ENCODE measurements at regions of chr10 and their contacts with region 1.

Region 1: DNA sequence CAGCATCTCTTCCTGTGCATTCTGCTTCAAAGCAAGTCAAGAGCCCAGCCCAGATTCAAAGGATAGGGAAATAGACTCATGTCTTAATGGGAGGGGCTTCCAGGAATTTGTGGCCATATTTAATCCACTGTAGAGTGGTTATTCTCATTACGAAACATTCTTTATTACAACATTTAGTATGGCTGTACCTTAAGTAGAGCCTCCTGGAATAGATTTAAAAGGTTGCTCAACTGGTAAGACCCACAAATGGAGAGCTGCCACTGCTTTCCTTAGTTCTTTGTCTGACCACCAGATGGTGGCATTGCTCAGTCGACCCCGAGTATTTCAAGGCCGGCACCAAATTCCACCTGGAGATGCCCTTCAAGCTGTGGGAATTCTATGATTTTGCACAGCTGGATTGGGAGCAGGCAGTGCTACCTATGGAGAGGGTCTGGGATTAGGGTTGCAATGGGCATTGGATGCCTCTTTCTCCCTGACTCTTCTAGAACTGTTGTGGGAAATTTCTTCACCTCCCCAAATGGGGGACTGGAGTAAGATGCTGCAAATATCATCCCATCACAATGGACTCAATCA is 102.2 kb downstream of the RBM20 start:
- DNase-seq: peak; percentile 84
- H3K4me3 Mint-ChIP-seq: no peak overlapping the region
- H3K27ac Mint-ChIP-seq: no peak overlapping the region
- H3K4me1 Mint-ChIP-seq: peaks cover 43% of the 10 kb centered on the region
- H3K27me3 Mint-ChIP-seq: no peaks in the 10 kb centered on the region

Region 2: DNA sequence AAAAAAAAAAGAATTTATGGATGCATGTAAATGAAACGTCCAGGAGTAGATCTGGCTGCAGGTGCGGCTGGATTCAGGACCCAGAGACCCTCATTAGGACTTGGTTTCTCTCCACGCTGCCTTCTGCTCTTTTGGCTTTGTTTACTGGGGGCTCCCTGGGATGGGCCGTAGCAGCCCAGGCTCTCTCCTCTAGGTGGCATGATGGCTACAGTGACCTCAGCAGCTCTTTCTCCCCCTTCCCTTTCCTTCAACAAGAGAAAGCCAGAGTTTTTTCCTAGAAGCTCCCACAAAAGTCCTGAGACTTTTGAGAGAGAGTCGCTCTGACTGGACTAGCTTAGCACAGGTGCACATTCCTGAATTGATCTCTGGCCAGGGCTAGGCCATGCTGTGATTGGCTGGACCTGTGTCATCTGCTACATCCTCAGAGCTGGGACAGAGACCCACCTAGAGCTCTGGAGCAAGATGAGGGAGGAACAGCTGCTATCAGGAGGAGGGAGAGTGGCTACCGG is 57.5 kb after region 1 on chr10:
- intact Hi-C with region 1: loop called (anchors 5 kb)
- DNase-seq: peak; percentile 72
- H3K4me3 Mint-ChIP-seq: peak overlapping the region; percentile 23
- H3K27ac Mint-ChIP-seq: peak overlapping the region; percentile 17
- H3K4me1 Mint-ChIP-seq: peaks cover 38% of the 10 kb centered on the region
- H3K27me3 Mint-ChIP-seq: no peaks in the 10 kb centered on the region

Region 3: DNA sequence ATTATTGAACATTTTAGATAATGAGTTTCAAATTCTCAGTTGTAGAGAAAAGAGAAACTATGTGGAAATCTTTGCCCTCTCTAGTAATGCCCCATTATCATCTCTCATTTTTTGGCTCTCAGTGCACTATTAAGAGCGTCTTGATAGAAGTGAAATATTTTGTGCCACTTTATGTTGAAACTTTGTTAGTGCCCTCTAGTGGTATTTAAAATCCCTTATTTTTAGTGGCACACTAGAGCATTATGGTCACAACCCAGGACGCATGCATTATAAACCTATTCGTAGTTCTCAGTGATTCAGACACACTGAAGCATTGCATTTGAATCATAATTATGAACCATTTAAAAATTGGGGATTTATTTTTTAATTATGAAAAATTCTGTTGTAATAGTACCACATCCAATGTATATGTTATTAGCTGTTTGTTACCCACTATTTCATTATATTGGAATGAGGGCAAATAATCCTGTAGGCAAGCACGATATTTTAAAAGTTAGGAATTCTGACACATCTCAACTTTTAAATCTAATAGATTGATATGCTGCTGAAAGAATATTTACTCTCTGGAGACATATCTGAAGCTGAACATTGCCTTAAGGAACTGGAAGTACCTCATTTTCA is 147.3 kb after region 1 on chr10:
- intact Hi-C with region 1: loop called (anchors 1 kb)
- DNase-seq: peak; percentile 61
- H3K4me3 Mint-ChIP-seq: no peak overlapping the region
- H3K27ac Mint-ChIP-seq: no peak overlapping the region
- H3K4me1 Mint-ChIP-seq: peaks cover 9% of the 10 kb centered on the region
- H3K27me3 Mint-ChIP-seq: no peaks in the 10 kb centered on the region

Region 4: GRCh38 chr10:111076191-111076681 is 329.9 kb after region 1 on chr10:
- intact Hi-C with region 1: loop called (anchors 5 kb)
- DNase-seq: peak; percentile 84
- H3K4me3 Mint-ChIP-seq: peak overlapping the region; percentile 78
- H3K27ac Mint-ChIP-seq: no peak overlapping the region
- H3K4me1 Mint-ChIP-seq: peaks cover 7% of the 10 kb centered on the region
- H3K27me3 Mint-ChIP-seq: peaks cover 71% of the 10 kb centered on the region

Region 5: GRCh38 chr10:111207500-111207899 is 461.2 kb after region 1 on chr10:
- intact Hi-C with region 1: loop called (anchors 2 kb)
- DNase-seq: peak; percentile 68
- H3K4me3 Mint-ChIP-seq: no peak overlapping the region
- H3K27ac Mint-ChIP-seq: no peak overlapping the region
- H3K4me1 Mint-ChIP-seq: no peaks in the 10 kb centered on the region
- H3K27me3 Mint-ChIP-seq: peaks cover 3% of the 10 kb centered on the region

Region 6: DNA sequence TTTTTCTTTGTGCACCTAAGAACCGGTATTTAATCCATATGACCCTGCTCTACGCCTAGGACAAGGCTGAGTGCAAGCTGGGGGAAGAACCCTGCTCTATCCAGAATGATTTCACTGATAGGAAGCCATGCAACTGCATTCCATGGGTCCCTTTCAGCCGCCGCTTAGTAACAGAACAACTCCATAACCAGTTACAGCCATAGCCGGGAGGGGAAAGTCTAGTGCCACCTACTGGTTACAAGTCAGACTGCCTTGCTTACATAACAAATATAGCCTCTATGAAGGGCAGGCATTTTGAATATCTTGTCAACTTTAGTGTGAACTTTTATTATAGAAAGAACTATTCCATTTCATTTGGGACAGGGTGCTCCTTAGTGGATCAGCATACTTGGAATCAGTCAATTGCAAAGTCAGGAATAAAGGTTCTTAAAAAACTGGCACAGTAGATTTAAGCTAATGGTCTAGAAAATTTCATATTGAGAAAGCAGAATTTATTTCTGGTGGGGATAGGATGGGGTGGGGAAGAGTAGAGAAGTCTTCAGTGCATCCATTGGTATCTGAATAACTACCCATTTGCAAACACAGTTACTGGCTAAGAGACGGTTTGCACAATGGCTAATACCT is 852.2 kb after region 1 on chr10:
- intact Hi-C with region 1: loop called (anchors 5 kb)
- DNase-seq: peak; percentile 81
- H3K4me3 Mint-ChIP-seq: no peak overlapping the region
- H3K27ac Mint-ChIP-seq: no peak overlapping the region
- H3K4me1 Mint-ChIP-seq: no peaks in the 10 kb centered on the region
- H3K27me3 Mint-ChIP-seq: no peaks in the 10 kb centered on the region

Measured in activated CD4-positive, alpha-beta T cell treated with anti-CD3 and anti-CD28 coated beads, Interleukin-2, amount 10 ng/mL, durations not matched to agents 24 days and 14 days (primary cell).